ENCODE measurements at regions of chr17 and their contacts with region 1.

Region 1: DNA sequence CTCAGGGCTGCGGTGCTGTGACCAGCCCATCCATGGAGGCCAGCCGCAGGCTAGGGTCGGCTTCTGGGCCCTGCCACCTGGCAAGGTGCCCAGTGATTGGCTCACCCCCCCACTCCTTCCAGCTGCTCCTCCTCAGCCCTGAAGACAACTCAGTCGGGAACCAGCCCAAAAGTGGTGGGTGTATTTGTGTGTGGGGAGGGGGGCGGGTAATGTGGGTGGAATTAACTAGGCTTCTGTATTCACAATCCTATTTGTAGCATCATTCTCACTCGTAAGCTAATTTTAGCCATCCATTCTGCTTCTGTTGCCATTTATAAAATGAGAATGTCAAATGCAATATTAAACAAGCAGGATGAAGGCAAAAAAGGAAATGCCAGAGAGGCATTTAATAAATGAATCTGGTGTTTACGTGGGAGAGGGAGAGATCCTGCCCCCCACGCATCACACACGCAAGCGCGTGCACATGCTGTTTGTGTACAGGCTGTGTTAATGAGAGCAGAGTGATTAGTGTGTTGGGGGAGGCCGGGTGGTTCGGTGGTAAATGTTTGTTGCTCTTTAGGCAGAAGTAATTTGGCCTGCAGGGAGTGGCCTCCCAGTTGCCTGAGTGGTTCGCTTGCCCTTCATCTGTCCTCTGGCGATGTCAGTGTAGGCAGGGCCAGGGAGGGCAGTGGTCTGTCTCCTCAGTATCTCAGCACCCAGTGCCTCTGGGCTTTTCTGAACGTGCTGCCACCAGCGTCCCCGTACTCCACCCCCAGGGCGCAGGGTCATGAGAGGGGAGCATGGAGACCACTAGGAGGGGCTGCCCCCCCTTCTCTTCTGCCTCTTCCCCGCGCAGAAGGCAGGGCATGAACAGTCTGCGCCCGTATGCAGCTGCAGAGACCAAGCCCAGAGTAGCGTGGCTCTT is 140.1 kb downstream of the CCDC182 start:
- DNase-seq: peak; percentile 63
- H3K4me3 Mint-ChIP-seq: peak overlapping the region; percentile 36
- H3K27ac Mint-ChIP-seq: peak overlapping the region; percentile 94
- H3K4me1 Mint-ChIP-seq: peaks cover 81% of the 10 kb centered on the region
- H3K27me3 Mint-ChIP-seq: no peaks in the 10 kb centered on the region

Region 2: GRCh38 chr17:56598466-56599148 is 1006.4 kb before region 1 on chr17:
- CTCF ChIA-PET with region 1: no interaction called
- intact Hi-C with region 1: loop called (anchors 5 kb)
- DNase-seq: peak; percentile 13
- H3K4me3 Mint-ChIP-seq: peak overlapping the region; percentile 52
- H3K27ac Mint-ChIP-seq: peak overlapping the region; percentile 85
- H3K4me1 Mint-ChIP-seq: peaks cover 66% of the 10 kb centered on the region
- H3K27me3 Mint-ChIP-seq: no peaks in the 10 kb centered on the region

Region 3: DNA sequence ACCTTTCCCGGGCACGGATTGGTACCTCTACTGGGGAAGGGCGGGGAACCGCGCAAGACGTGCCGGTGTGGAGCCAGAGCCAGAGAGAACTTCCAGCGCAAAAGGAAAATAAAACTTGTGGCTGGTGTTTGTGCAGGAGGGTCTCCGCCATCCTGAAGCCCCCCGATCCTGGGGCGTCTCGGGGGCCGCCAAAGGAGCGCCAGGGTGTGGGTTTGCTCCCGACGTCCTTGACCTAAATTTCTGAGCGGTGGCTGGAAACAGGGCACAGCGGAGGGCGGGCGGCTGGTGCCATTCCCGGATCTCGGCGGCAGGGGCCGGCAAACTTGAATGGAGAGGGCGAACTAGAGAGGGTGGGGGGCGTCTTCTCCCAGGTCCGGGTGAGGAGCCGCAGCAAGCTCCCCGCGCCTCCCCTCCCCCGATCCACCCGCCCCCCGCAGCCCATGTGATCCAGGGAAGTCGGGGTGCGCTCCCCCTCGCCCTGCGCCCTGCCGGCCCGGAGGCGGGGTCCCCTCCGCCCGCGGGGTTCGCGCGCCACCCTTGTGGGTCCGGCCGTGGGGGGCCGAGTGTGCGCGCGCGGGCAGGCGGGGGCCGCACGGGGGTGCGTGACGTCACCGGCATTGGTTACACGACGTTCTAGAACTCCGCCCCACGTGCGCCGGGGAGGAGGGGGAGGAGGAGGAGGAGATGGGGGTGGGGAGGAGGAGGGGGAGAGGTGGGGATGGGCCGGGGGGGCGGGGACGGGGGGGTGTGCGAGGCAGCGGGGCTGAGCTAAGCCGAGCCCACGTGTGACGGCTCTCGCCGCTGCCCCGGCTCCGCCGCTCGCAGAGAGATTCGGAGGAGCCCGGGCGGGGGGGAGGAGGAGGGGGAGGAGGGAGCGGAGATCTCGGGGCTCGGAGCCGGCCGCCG is 349.0 kb before region 1 on chr17 and contains the start of gene MSI2:
- CTCF ChIA-PET with region 1: interaction called, 3 read pairs
- intact Hi-C with region 1: loop called (anchors 1 kb)
- DNase-seq: peak; percentile 88
- H3K4me3 Mint-ChIP-seq: peak within 1 kb of the TSS; percentile 90
- H3K27ac Mint-ChIP-seq: peak within 1 kb of the TSS; percentile 86
- H3K4me1 Mint-ChIP-seq: peaks cover 38% of the 10 kb centered on the region
- H3K27me3 Mint-ChIP-seq: no peaks in the 10 kb centered on the region
- total RNA-seq, gene MSI2: 38.8 to 39.0 TPM

Region 4: DNA sequence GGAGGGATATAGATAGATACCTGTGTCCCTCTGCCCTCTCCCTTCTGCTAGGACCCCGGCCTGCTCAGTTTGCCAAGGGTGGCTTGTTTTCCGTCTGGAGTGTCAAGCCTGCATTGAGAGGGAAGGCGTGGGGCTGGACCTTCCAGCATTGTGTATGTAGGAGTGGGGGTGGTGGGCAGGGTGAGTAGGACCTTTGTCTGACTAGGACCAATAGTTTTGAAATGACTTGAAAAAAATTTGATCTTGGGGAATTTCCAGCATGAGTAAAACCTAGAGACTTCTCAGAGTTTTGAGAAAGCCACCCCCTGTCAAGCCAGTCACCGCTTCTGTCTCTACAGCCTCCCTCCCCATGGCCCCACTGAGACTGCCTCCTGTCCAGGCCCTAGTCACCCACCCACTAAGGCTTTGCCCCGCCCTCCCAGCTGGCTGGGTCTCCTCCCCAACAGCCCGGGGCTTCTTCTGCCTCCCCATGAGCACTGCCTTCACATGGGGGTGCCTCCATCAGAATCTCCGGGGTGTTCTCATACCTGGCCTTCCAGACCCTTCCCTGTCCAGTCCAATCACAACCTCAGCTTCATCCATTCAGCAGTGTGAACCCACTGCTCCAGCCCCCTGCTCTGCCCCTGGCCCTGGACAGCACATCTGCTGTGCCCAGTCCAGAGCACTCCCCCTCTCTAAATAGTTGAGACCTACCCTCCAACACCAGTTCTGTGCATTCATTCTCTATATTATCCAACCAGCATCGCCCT is 141.7 kb before region 1 on chr17:
- CTCF ChIA-PET with region 1: no interaction called
- intact Hi-C with region 1: loop called (anchors 1 kb)
- DNase-seq: peak; percentile 94
- H3K4me3 Mint-ChIP-seq: peak overlapping the region; percentile 8
- H3K27ac Mint-ChIP-seq: peak overlapping the region; percentile 73
- H3K4me1 Mint-ChIP-seq: peaks cover 59% of the 10 kb centered on the region
- H3K27me3 Mint-ChIP-seq: no peaks in the 10 kb centered on the region

Region 5: GRCh38 chr17:57645950-57646665 is 41.1 kb after region 1 on chr17:
- CTCF ChIA-PET with region 1: no interaction called
- intact Hi-C with region 1: loop called (anchors 2 kb)
- DNase-seq: peak; percentile 38
- H3K4me3 Mint-ChIP-seq: no peak overlapping the region
- H3K27ac Mint-ChIP-seq: peak overlapping the region; percentile 22
- H3K4me1 Mint-ChIP-seq: peaks cover 7% of the 10 kb centered on the region
- H3K27me3 Mint-ChIP-seq: no peaks in the 10 kb centered on the region

Region 6: DNA sequence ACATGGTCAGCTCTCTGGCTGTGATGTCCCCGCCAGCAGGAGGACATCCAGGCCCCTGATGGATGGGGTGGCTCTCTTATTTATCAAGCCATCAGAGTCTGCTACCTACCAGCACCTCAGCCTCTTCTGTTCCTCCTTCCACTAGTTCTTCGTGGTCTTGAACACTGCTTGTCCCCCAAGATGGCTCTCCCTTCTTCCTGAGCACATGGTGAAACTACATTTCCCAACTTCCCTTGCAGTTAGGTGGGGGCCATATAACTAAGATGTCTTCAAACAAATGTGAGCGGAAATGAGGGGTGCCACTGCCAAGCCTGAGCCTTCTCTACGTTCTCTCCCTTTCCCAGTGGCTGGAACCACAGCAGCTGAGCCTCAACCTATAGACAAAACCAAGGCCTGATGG is 169.8 kb after region 1 on chr17:
- CTCF ChIA-PET with region 1: no interaction called
- intact Hi-C with region 1: no loop called
- DNase-seq: no peak
- H3K4me3 Mint-ChIP-seq: no peak overlapping the region
- H3K27ac Mint-ChIP-seq: no peak overlapping the region
- H3K4me1 Mint-ChIP-seq: no peaks in the 10 kb centered on the region
- H3K27me3 Mint-ChIP-seq: peaks cover 21% of the 10 kb centered on the region

Region 7: DNA sequence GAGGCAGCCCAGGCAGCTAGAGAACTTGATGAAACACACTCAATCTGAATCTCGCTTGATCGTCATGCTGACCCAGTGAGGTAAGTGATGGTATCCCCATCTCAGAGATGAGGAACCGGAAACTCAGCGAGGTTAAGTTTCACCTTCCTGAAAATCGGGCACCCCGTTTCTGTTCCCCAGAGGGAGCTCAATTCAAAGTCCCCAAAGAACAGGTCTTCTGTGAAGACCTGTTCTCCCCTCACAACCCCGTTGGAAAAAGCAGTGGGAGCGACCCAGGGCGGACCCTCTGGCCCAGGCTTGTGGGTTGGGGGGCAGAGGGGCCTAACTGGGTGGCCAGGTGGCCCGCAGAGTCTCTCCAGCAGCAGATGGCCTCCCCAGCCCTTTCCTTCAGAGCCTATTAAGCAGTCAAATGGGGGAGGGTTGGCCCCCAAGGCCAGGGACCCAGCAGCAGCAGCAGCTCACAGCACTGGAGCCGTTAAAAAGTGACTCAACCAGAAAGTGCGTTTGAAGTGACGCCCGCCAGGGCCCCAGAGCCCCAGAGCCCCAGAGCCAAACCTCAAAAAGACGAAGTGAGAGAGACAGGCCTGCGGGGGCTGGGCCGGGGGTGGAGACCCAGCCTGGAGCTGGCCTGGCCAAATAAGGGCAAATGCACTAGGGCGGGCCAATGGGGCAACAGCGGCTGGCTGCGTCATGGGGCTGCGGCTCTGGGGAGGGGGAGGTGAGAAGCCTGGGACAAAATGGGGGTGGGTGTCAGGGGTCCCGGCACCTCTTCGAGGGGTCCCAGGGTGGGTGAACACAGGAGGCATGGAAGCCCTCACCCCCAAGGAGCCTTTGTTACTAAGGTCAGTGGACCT is 732.8 kb after region 1 on chr17:
- CTCF ChIA-PET with region 1: no interaction called
- intact Hi-C with region 1: loop called (anchors 5 kb)
- DNase-seq: peak; percentile 98
- H3K4me3 Mint-ChIP-seq: peak overlapping the region; percentile 92
- H3K27ac Mint-ChIP-seq: peak overlapping the region; percentile 99
- H3K4me1 Mint-ChIP-seq: peaks cover 7% of the 10 kb centered on the region
- H3K27me3 Mint-ChIP-seq: no peaks in the 10 kb centered on the region

Measured in activated naive CD4-positive, alpha-beta T cell treated with anti-CD3 and anti-CD28 coated beads for 36 hours (primary cell).